ENCODE measurements at regions of chr3 and their contacts with region 1.

Region 1: GRCh38 chr3:112779558-112780480 is 66.8 kb downstream of the CD200R1L start:
- DNase-seq: peak in 1 of 2 experiments; percentile 55
- H3K4me3 ChIP-seq: no peak overlapping the region
- H3K27ac ChIP-seq: peak overlapping the region; percentile 93
- H3K4me1 ChIP-seq: peaks cover 65% of the 10 kb centered on the region
- H3K27me3 ChIP-seq: no peaks in the 10 kb centered on the region
- CTCF ChIP-seq: no peak

Region 2: DNA sequence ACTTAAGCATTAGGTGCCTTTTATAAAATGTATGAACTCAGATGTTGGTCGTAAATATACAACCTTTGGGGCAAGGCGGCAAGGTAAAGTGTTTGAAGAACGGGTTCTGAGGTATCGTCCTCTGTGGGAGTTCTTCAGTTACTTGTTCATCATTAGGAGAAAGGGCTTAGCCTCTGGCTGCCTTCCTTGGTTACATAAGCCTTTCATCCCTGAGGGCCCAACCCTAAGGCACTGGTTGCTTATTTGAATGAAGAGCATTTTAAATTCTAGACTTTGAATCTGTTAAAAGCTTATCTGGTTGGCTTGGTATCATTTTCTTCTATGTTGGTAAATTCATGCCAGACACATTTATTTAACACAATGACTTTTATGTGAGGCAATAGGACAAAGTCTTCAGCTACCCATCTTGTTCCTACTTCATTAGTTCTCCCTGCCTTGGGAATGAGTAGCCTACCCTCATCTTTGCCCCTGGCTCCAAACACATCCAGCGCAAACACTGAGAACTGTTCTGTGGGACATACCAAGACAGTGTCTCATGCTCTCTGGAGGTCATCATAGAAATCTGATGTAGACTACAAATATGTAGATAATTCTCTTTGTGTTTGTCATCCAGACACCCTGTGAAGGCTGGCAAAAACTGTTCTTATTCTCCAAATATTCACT is 126.5 kb before region 1 on chr3:
- CTCF ChIA-PET with region 1: no interaction called
- POLR2A ChIA-PET with region 1: interaction called, 12 read pairs
- intact Hi-C with region 1: no loop called
- DNase-seq: peak; percentile 76 to 96
- H3K4me3 ChIP-seq: no peak overlapping the region
- H3K27ac ChIP-seq: peak overlapping the region; percentile 92
- H3K4me1 ChIP-seq: peaks cover 55% of the 10 kb centered on the region
- H3K27me3 ChIP-seq: no peaks in the 10 kb centered on the region
- CTCF ChIP-seq: no peak

Region 3: DNA sequence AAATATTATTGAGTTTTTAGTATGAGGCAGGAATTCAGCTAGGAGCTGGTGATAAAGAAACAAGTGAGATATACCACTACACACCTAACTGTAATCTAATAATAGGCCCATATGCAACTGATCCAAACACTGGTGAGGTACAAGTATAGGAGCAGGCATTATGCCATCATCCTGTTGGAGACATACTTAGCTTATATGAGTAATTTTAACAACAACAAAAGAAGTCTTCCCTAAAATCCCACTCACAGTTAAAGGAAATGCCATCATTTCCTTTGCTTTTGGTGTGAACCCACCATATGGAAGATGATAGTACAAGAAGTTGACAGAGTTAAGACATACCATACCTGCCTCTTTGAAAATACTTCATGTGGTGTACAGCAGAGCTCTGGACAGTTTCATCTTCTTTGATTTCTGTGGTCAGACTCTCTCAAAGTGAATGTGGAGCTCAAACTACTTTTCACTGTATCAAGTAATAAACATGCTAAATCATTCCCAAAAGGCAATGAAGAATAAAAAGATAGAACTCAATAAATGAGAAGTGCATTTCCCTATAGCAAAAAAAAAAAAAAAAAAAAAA is 18.7 kb before region 1 on chr3:
- CTCF ChIA-PET with region 1: no interaction called
- POLR2A ChIA-PET with region 1: no interaction called
- intact Hi-C with region 1: no loop called
- DNase-seq: no peak
- H3K4me3 ChIP-seq: no peak overlapping the region
- H3K27ac ChIP-seq: no peak overlapping the region
- H3K4me1 ChIP-seq: peaks cover 11% of the 10 kb centered on the region; the same call in 1 of the 2 replicates
- H3K27me3 ChIP-seq: no peaks in the 10 kb centered on the region
- CTCF ChIP-seq: no peak

Region 4: DNA sequence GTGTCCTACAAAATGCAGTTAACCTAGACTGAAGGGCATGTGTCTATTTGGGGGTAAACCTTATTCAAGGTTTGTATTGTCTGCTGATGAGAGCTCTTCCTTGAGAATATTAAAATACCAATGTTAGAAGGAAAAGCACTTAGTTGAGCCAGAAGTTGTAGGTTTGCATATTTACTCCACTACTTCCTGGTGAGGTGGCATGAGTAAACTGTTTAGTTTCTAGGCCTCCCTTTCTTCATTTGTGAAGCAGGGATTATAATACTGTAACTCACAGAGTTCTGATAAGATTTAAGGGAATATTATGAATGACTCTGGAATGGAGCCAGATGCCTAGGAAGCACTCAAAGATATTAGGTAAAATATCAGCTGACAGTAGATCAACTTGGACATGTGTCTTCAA is 20.1 kb after region 1 on chr3:
- CTCF ChIA-PET with region 1: interaction called, 3 read pairs
- POLR2A ChIA-PET with region 1: interaction called, 6 read pairs
- intact Hi-C with region 1: loop called (anchors 1 kb)
- DNase-seq: peak; percentile 8 to 80
- H3K4me3 ChIP-seq: no peak overlapping the region
- H3K27ac ChIP-seq: peak overlapping the region; percentile 88
- H3K4me1 ChIP-seq: peaks cover 46% of the 10 kb centered on the region
- H3K27me3 ChIP-seq: no peaks in the 10 kb centered on the region
- CTCF ChIP-seq: no peak

Region 5: GRCh38 chr3:113166719-113167492 is 387.1 kb after region 1 on chr3:
- CTCF ChIA-PET with region 1: no interaction called
- POLR2A ChIA-PET with region 1: no interaction called
- intact Hi-C with region 1: no loop called
- DNase-seq: peak in 1 of 2 experiments; percentile 80
- H3K4me3 ChIP-seq: no peak overlapping the region
- H3K27ac ChIP-seq: no peak overlapping the region
- H3K4me1 ChIP-seq: no peaks in the 10 kb centered on the region
- H3K27me3 ChIP-seq: no peaks in the 10 kb centered on the region
- CTCF ChIP-seq: no peak

Measured in PC-9 (cell line).